ENCODE measurements at regions of chr20 and their contacts with region 1.

Region 1: GRCh38 chr20:45347936-45348778 is at the start of gene SDC4:
- DNase-seq: peak; percentile 65 to 86
- ATAC-seq: peak; percentile 35 to 45
- H3K4me3 ChIP-seq: peak within 1 kb of the TSS; percentile 60 to 97 (median 91)
- H3K27ac ChIP-seq: peak within 1 kb of the TSS; percentile 90 to 100 (median 98)
- H3K4me1 ChIP-seq: peaks cover 21 to 45% of the 10 kb centered on the region in 2 donors
- H3K27me3 ChIP-seq: no peaks in the 10 kb centered on the region
- CTCF ChIP-seq: no peak
- POLR2A ChIP-seq: peak; percentile 99
- total RNA-seq, gene SDC4: 50.4 to 168 (median 97.8) TPM

Region 2: GRCh38 chr20:44187051-44187762 is 1161.0 kb before region 1 on chr20 and contains the start of gene JPH2:
- in situ Hi-C with region 1: loop called in 1 of 4 experiments (anchors 25 kb)
- intact Hi-C with region 1: no loop called
- DNase-seq: peak; percentile 79 to 91
- ATAC-seq: peak; percentile 65 to 70
- H3K4me3 ChIP-seq: peak within 1 kb of the TSS; percentile 70 to 77 (median 73)
- H3K27ac ChIP-seq: peak within 1 kb of the TSS; percentile 92 to 98 (median 96)
- H3K4me1 ChIP-seq: peaks cover 56 to 65% of the 10 kb centered on the region in 2 donors
- H3K27me3 ChIP-seq: no peaks in the 10 kb centered on the region
- CTCF ChIP-seq: no peak
- POLR2A ChIP-seq: peak; percentile 60 to 81
- total RNA-seq, gene JPH2: 18.3 to 86.6 (median 38.0) TPM

Measured in gastrocnemius medialis (tissue), 4 donors.